CD4-positive, alpha-beta T cell (primary cell): ENCODE measurements at regions of chr6 and their contacts with region 1.

Region 1: DNA sequence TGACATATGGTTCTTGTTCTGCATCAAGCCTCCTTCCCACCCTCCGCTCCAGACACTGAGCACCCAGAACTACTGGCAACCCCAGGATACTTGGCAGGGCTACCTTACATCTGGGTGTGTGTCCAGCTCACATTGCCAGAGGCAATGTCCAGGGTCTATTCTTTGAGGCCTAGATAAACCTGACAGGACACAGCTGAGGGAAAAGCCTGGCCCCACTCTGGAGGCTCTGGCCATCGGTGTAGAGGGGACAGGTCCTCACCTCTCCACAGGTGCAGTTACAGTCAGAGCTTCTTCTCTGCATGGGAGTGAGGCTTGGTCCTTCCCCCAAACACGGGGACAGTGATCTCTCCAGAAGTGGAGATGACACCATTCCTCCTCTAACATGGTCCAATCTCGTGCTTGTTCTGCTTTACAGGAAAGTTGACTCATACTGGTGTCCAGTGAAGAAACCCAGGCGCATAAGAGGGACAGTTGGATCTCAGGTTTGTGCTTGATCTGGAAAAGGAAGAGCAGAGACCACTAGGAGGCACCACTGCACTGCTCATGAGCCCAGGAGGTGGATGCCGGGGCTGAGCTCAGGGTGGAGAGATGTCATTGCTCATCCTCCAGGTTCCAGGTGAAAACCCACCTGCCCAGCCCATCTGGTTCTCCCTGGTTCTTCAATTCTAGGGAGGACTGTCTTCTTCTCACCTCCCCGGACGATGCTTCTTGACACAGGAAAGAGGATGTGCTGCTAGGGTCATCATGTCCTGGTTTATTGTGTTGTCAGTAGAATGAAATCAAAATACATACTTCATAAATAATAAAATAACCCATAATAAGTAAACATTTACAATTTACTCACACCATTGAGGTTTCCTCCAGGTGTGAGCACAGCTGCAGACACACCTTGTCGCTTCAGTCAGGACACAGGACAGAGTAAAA is 14.7 kb downstream of the HLA-F start:
- DNase-seq: peak; percentile 60 to 89 (median 66)
- ATAC-seq: peak; percentile 90
- H3K4me3 ChIP-seq: no peak overlapping the region
- H3K4me3 Mint-ChIP-seq: no peak overlapping the region
- H3K27ac ChIP-seq: no peak overlapping the region
- H3K27ac Mint-ChIP-seq: no peak overlapping the region
- H3K4me1 ChIP-seq: peaks cover 3% of the 10 kb centered on the region
- H3K4me1 Mint-ChIP-seq: peaks cover 15% of the 10 kb centered on the region
- H3K27me3 ChIP-seq: no peaks in the 10 kb centered on the region
- H3K27me3 Mint-ChIP-seq: no peaks in the 10 kb centered on the region
- CTCF ChIP-seq: peak; percentile 91

Region 2: GRCh38 chr6:29723262-29723665 is 14.7 kb before region 1 on chr6 and contains the start of gene HLA-F:
- CTCF ChIA-PET with region 1: interaction called, 4 read pairs
- POLR2A ChIA-PET with region 1: interaction called, 13 read pairs
- intact Hi-C with region 1: no loop called
- DNase-seq: peak in 13 of 14 experiments; percentile 69 to 96 (median 79)
- ATAC-seq: peak; percentile 90
- H3K4me3 ChIP-seq: peak within 1 kb of the TSS; percentile 100
- H3K4me3 Mint-ChIP-seq: peak within 1 kb of the TSS; percentile 97
- H3K27ac ChIP-seq: peak within 1 kb of the TSS; percentile 99 to 100
- H3K27ac Mint-ChIP-seq: peak within 1 kb of the TSS; percentile 95
- H3K4me1 ChIP-seq: peaks cover 63% of the 10 kb centered on the region
- H3K4me1 Mint-ChIP-seq: peaks cover 70% of the 10 kb centered on the region
- H3K27me3 ChIP-seq: no peaks in the 10 kb centered on the region
- H3K27me3 Mint-ChIP-seq: no peaks in the 10 kb centered on the region
- CTCF ChIP-seq: no peak
- total RNA-seq, gene HLA-F: 560 TPM

Region 3: GRCh38 chr6:29752451-29753308 is 14.7 kb after region 1 on chr6:
- CTCF ChIA-PET with region 1: interaction called, 82 read pairs
- POLR2A ChIA-PET with region 1: interaction called, 15 read pairs
- intact Hi-C with region 1: loop called (anchors 1 kb)
- DNase-seq: peak; percentile 71 to 94 (median 79)
- ATAC-seq: peak; percentile 72
- H3K4me3 ChIP-seq: peak overlapping the region; percentile 75
- H3K4me3 Mint-ChIP-seq: peak overlapping the region; percentile 90
- H3K27ac ChIP-seq: peak overlapping the region; percentile 30 to 58
- H3K27ac Mint-ChIP-seq: peak overlapping the region; percentile 83
- H3K4me1 ChIP-seq: peaks cover 28% of the 10 kb centered on the region
- H3K4me1 Mint-ChIP-seq: peaks cover 42% of the 10 kb centered on the region
- H3K27me3 ChIP-seq: no peaks in the 10 kb centered on the region
- H3K27me3 Mint-ChIP-seq: no peaks in the 10 kb centered on the region
- CTCF ChIP-seq: peak; percentile 99

Region 4: GRCh38 chr6:29834564-29835436 is 96.8 kb after region 1 on chr6:
- CTCF ChIA-PET with region 1: interaction called, 17 read pairs
- POLR2A ChIA-PET with region 1: interaction called, 4 read pairs
- intact Hi-C with region 1: loop called (anchors 1 kb)
- DNase-seq: peak; percentile 30 to 74 (median 52)
- ATAC-seq: peak; percentile 54
- H3K4me3 ChIP-seq: no peak overlapping the region
- H3K4me3 Mint-ChIP-seq: no peak overlapping the region
- H3K27ac ChIP-seq: no peak overlapping the region
- H3K27ac Mint-ChIP-seq: no peak overlapping the region
- H3K4me1 ChIP-seq: peaks cover 6% of the 10 kb centered on the region
- H3K4me1 Mint-ChIP-seq: no peaks in the 10 kb centered on the region
- H3K27me3 ChIP-seq: peaks cover 14 to 30% of the 10 kb centered on the region in 2 experiments
- H3K27me3 Mint-ChIP-seq: peaks cover 75% of the 10 kb centered on the region
- CTCF ChIP-seq: peak; percentile 83